ENCODE measurements at regions of chr19 and their contacts with region 1.

Region 1: GRCh38 chr19:48501496-48502350 is 9.9 kb downstream of the LMTK3 start:
- H3K4me3 ChIP-seq: peak overlapping the region; percentile 21
- H3K27ac ChIP-seq: no peak overlapping the region; the same call in 1 of the 2 replicates
- H3K4me1 ChIP-seq: peaks cover 3% of the 10 kb centered on the region; the same call in 1 of the 2 replicates
- CTCF ChIP-seq: no peak

Region 2: GRCh38 chr19:48513289-48514122 is 11.8 kb after region 1 on chr19:
- CTCF ChIA-PET with region 1: interaction called, 4 read pairs
- POLR2A ChIA-PET with region 1: interaction called, 10 read pairs
- H3K4me3 ChIP-seq: peak overlapping the region; percentile 61
- H3K27ac ChIP-seq: no peak overlapping the region; the same call in 1 of the 2 replicates
- H3K4me1 ChIP-seq: no peaks in the 10 kb centered on the region
- CTCF ChIP-seq: peak; percentile 22; the same call in 1 of the 2 replicates